ENCODE measurements at regions of chr17 and their contacts with region 1.

Region 1: GRCh38 chr17:69246726-69247375 is 18.2 kb upstream of the ABCA10 start:
- DNase-seq: no peak
- ATAC-seq: no peak
- H3K4me3 ChIP-seq: no peak overlapping the region
- H3K27ac ChIP-seq: no peak overlapping the region
- H3K4me1 ChIP-seq: no peaks in the 10 kb centered on the region
- H3K27me3 ChIP-seq: no peaks in the 10 kb centered on the region

Region 2: DNA sequence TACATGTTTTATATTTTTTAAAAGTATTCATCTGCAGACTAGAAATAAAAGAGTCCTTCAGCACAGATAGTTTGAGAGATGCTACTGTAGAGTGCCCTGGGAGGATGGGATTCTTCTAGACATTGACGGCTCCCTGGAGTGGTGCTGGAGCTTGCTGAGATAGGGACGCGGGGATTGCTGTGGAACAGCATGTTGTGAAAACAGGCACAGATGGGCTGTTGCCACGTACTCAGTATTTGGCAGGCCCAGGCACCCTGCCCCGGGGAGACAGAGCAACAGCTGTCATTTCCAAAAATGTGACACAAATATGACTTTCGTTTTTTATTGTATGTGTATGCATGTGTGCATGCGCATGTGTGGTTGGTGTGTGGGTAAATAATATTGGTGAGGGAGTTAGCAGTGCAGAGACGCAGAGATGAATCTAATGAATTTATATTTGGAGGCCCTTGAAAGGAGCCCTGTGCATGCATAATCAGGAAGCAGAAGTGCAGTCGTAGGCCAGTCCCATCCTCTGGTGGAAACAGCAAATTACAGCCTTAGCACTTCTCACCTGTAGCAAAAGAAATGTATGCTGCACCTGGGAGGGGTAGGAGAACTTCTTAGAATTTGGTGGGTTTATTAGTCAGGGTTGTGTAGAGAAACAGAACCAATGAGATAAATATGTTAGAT is 285.5 kb before region 1 on chr17:
- intact Hi-C with region 1: loop called in 1 of 2 experiments (anchors 10 kb)
- DNase-seq: no peak
- ATAC-seq: no peak
- H3K4me3 ChIP-seq: no peak overlapping the region
- H3K27ac ChIP-seq: no peak overlapping the region
- H3K4me1 ChIP-seq: no peaks in the 10 kb centered on the region
- H3K27me3 ChIP-seq: no peaks in the 10 kb centered on the region

Region 3: GRCh38 chr17:69175812-69176795 is 70.7 kb before region 1 on chr17:
- intact Hi-C with region 1: no loop called
- DNase-seq: no peak
- ATAC-seq: no peak
- H3K4me3 ChIP-seq: no peak overlapping the region
- H3K27ac ChIP-seq: no peak overlapping the region
- H3K4me1 ChIP-seq: no peaks in the 10 kb centered on the region
- H3K27me3 ChIP-seq: no peaks in the 10 kb centered on the region

Region 4: GRCh38 chr17:69287168-69287567 is 40.3 kb after region 1 on chr17:
- intact Hi-C with region 1: no loop called
- DNase-seq: no peak
- ATAC-seq: no peak
- H3K4me3 ChIP-seq: no peak overlapping the region
- H3K27ac ChIP-seq: no peak overlapping the region
- H3K4me1 ChIP-seq: no peaks in the 10 kb centered on the region
- H3K27me3 ChIP-seq: no peaks in the 10 kb centered on the region